B cell (primary cell): ENCODE measurements at regions of chr14 and their contacts with region 1.

Region 1: GRCh38 chr14:35533357-35534207 is at the start of gene INSM2:
- DNase-seq: peak; percentile 57
- ATAC-seq: peak; percentile 65
- H3K4me3 ChIP-seq: peak within 1 kb of the TSS in 4 of 5 experiments; percentile 43 to 67 (median 62)
- H3K4me3 Mint-ChIP-seq: peak within 1 kb of the TSS; percentile 87
- H3K27ac ChIP-seq: no peak within 1 kb of the TSS
- H3K27ac Mint-ChIP-seq: no peak within 1 kb of the TSS
- H3K4me1 ChIP-seq: peaks cover 21 to 23% of the 10 kb centered on the region in 2 donors
- H3K4me1 Mint-ChIP-seq: peaks cover 18% of the 10 kb centered on the region
- H3K27me3 ChIP-seq: peaks cover 3 to 35% (median 34%) of the 10 kb centered on the region in 4 experiments
- H3K27me3 Mint-ChIP-seq: peaks cover 57% of the 10 kb centered on the region
- CTCF ChIP-seq: no peak
- total RNA-seq, gene INSM2: not detected in 2 replicates

Region 2: GRCh38 chr14:35492569-35493014 is 41.0 kb before region 1 on chr14:
- CTCF ChIA-PET with region 1: no interaction called
- POLR2A ChIA-PET with region 1: no interaction called
- intact Hi-C with region 1: no loop called
- DNase-seq: no peak
- ATAC-seq: no peak
- H3K4me3 ChIP-seq: no peak overlapping the region
- H3K4me3 Mint-ChIP-seq: no peak overlapping the region
- H3K27ac ChIP-seq: no peak overlapping the region
- H3K27ac Mint-ChIP-seq: no peak overlapping the region
- H3K4me1 ChIP-seq: no peaks in the 10 kb centered on the region
- H3K4me1 Mint-ChIP-seq: no peaks in the 10 kb centered on the region
- H3K27me3 ChIP-seq: peaks cover 0 to 9% (median 2%) of the 10 kb centered on the region in 4 experiments
- H3K27me3 Mint-ChIP-seq: peaks cover 32% of the 10 kb centered on the region
- CTCF ChIP-seq: no peak

Region 3: DNA sequence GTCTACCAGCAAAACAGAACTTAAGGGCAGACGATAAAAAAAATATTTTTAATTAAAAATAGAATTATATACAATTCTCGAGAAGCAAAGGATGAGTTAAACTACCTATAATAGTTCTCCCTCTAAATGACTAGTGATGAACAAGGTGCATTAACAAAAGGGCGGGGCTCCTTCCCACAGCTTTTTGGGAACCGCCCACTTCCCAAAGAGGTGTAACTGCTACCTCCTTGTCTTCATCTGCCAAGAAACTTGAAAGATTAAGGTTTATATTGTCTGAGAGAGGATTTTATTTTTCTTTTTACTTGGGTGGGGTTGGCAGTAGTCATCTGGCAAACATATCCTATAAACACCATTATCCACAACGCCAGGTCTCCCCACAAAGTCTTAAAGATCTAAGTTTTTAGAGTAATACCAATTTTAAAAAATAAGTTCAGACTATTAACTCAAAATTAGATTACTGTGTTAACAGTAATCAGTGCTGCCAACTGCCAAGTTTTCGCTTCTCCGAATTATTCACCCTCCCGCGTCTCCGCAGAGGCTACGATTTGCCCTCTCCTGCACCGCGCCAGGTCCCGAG is 274.6 kb after region 1 on chr14:
- CTCF ChIA-PET with region 1: no interaction called
- POLR2A ChIA-PET with region 1: no interaction called
- intact Hi-C with region 1: loop called (anchors 10 kb)
- DNase-seq: no peak
- ATAC-seq: no peak
- H3K4me3 ChIP-seq: peak overlapping the region; percentile 57 to 81 (median 70)
- H3K4me3 Mint-ChIP-seq: peak overlapping the region; percentile 98
- H3K27ac ChIP-seq: peak overlapping the region; percentile 78 to 88
- H3K27ac Mint-ChIP-seq: peak overlapping the region; percentile 95
- H3K4me1 ChIP-seq: peaks cover 12 to 14% of the 10 kb centered on the region in 2 donors
- H3K4me1 Mint-ChIP-seq: peaks cover 29% of the 10 kb centered on the region
- H3K27me3 ChIP-seq: no peaks in the 10 kb centered on the region
- H3K27me3 Mint-ChIP-seq: no peaks in the 10 kb centered on the region
- CTCF ChIP-seq: no peak